Natural killer cell (primary cell): ENCODE measurements at regions of chr1 and their contacts with region 1.

Region 1: GRCh38 chr1:71737768-71738167 is 544.6 kb downstream of the NEGR1 start:
- DNase-seq: no peak
- ATAC-seq: no peak
- H3K4me3 ChIP-seq: no peak overlapping the region
- H3K4me3 Mint-ChIP-seq: no peak overlapping the region
- H3K27ac ChIP-seq: no peak overlapping the region
- H3K27ac Mint-ChIP-seq: no peak overlapping the region
- H3K4me1 ChIP-seq: no peaks in the 10 kb centered on the region
- H3K4me1 Mint-ChIP-seq: no peaks in the 10 kb centered on the region
- H3K27me3 ChIP-seq: no peaks in the 10 kb centered on the region
- H3K27me3 Mint-ChIP-seq: no peaks in the 10 kb centered on the region
- CTCF ChIP-seq: no peak

Region 2: GRCh38 chr1:71695821-71696220 is 41.9 kb before region 1 on chr1:
- intact Hi-C with region 1: loop called (anchors 1 kb)
- DNase-seq: no peak
- ATAC-seq: no peak
- H3K4me3 ChIP-seq: no peak overlapping the region
- H3K4me3 Mint-ChIP-seq: no peak overlapping the region
- H3K27ac ChIP-seq: no peak overlapping the region
- H3K27ac Mint-ChIP-seq: no peak overlapping the region
- H3K4me1 ChIP-seq: no peaks in the 10 kb centered on the region
- H3K4me1 Mint-ChIP-seq: no peaks in the 10 kb centered on the region
- H3K27me3 ChIP-seq: no peaks in the 10 kb centered on the region
- H3K27me3 Mint-ChIP-seq: no peaks in the 10 kb centered on the region
- CTCF ChIP-seq: no peak